ENCODE measurements at regions of chr5 and their contacts with region 1.

Region 1: GRCh38 chr5:111092062-111092853 is at the start of gene WDR36:
- DNase-seq: peak; percentile 93
- H3K4me3 Mint-ChIP-seq: peak within 1 kb of the TSS; percentile 92
- H3K27ac Mint-ChIP-seq: peak within 1 kb of the TSS; percentile 94
- H3K4me1 Mint-ChIP-seq: peaks cover 38% of the 10 kb centered on the region
- H3K27me3 Mint-ChIP-seq: peaks cover 3% of the 10 kb centered on the region
- total RNA-seq, gene WDR36: 43.5 to 44.1 TPM

Region 2: GRCh38 chr5:110726249-110727024 is 365.8 kb before region 1 on chr5 and contains the start of gene TMEM232:
- CTCF ChIA-PET with region 1: no interaction called
- POLR2A ChIA-PET with region 1: no interaction called
- intact Hi-C with region 1: loop called (anchors 1 kb)
- DNase-seq: peak; percentile 86
- H3K4me3 Mint-ChIP-seq: peak within 1 kb of the TSS; percentile 83
- H3K27ac Mint-ChIP-seq: peak within 1 kb of the TSS; percentile 33
- H3K4me1 Mint-ChIP-seq: peaks cover 3% of the 10 kb centered on the region
- H3K27me3 Mint-ChIP-seq: no peaks in the 10 kb centered on the region
- total RNA-seq, gene TMEM232: 0.74 to 0.92 TPM

Region 3: DNA sequence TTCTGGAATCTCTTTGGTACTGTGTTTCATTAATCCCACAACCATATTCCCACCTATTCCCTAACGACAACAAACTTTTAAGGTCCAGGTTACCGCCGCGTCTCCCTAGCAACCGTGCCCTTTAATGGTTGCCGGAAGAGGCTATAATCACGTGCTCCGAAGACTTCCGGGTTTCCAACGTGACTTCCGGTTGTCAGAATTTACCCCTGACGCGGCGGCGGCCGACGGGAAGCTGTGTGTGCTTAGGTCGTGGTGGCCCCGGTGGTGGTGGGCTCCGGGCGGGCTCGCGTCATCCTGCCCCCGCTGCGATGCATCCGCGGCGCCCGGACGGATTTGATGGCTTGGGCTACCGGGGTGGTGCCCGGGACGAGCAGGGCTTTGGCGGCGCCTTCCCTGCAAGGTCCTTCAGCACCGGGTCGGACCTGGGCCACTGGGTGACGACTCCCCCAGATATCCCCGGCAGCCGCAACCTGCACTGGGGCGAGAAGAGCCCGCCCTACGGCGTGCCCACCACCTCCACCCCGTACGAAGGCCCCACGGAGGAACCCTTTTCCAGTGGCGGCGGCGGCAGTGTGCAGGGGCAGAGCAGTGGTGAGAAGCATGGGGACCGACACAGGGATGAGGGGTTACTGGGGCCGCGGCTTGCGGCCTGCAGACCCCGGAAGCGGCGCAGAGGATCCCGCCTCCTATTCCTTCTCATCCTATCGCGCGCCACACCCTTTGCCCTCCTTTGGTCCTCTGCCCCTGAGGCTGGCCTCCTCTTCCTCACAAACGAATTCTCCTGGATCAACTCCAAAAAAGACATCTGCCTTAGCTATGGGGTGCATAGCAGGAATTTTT is 353.2 kb before region 1 on chr5 and contains the start of gene SLC25A46:
- CTCF ChIA-PET with region 1: interaction called, 6 read pairs
- POLR2A ChIA-PET with region 1: interaction called, 8 read pairs
- intact Hi-C with region 1: loop called (anchors 1 kb)
- DNase-seq: peak; percentile 93
- H3K4me3 Mint-ChIP-seq: peak within 1 kb of the TSS; percentile 91
- H3K27ac Mint-ChIP-seq: peak within 1 kb of the TSS; percentile 84
- H3K4me1 Mint-ChIP-seq: peaks cover 34% of the 10 kb centered on the region
- H3K27me3 Mint-ChIP-seq: peaks cover 5% of the 10 kb centered on the region
- total RNA-seq, gene SLC25A46: 35.4 to 37.6 TPM

Region 4: DNA sequence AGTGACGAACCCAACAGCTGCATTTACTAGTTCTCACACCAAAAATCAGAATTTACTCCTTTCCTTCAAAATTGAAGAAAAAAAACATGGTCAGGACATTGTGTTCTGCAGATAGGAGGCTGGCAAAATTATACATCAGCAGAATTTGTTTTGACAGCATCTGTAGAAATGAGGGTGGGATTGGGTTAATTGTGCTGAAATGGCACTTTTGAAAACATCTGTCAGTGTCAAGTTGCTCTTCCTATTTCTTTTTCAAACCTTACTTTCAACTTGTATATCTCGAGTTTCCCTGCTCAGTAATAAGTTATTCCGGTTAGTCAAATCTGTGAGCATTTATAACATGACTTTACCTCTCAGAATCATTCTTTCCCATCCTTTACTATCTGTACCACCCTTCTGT is 19.7 kb after region 1 on chr5:
- CTCF ChIA-PET with region 1: no interaction called
- POLR2A ChIA-PET with region 1: no interaction called
- intact Hi-C with region 1: loop called (anchors 2 kb)
- DNase-seq: no peak
- H3K4me3 Mint-ChIP-seq: no peak overlapping the region
- H3K27ac Mint-ChIP-seq: no peak overlapping the region
- H3K4me1 Mint-ChIP-seq: peaks cover under 1% of the 10 kb centered on the region
- H3K27me3 Mint-ChIP-seq: no peaks in the 10 kb centered on the region

Region 5: DNA sequence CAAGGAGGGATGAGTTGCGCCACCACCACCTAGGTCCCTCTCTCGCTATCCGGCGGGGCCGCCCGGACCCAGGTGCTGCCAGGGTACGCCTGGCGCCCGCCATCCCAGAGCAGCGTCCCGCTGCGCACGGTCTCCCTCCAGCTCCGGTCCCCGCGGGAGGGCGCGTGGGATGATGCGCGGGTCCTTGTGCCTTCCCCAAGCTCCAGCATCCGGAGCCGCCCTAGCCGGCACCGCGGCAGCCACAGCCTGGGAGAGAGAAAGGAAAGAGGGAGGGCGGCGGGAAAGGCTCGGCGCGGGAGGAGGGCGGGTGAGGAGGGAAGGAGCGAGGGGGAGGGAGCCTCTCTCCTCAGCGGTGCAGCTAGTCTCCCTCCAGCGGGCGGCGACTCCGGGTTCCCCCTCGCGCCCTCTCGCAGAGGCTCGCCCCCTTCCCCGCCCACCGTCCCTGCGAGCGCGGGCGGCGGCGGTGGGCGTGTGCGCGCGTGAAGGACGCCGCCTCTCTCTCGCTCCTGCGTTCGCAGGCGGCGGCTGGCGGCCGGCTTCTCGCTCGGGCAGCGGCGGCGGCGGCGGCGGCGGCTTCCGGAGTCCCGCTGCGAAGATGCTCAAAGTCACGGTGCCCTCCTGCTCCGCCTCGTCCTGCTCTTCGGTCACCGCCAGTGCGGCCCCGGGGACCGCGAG is 131.8 kb after region 1 on chr5 and contains the start of gene CAMK4:
- CTCF ChIA-PET with region 1: no interaction called
- POLR2A ChIA-PET with region 1: no interaction called
- intact Hi-C with region 1: loop called (anchors 5 kb)
- DNase-seq: peak; percentile 77
- H3K4me3 Mint-ChIP-seq: peak within 1 kb of the TSS; percentile 89
- H3K27ac Mint-ChIP-seq: peak within 1 kb of the TSS; percentile 90
- H3K4me1 Mint-ChIP-seq: peaks cover 34% of the 10 kb centered on the region
- H3K27me3 Mint-ChIP-seq: no peaks in the 10 kb centered on the region
- total RNA-seq, gene CAMK4: 33.3 to 36.5 TPM

Measured in activated CD4-positive, alpha-beta memory T cell treated with anti-CD3 and anti-CD28 coated beads for 36 hours (primary cell).